ENCODE measurements at regions of chr3 and their contacts with region 1.

Region 1: GRCh38 chr3:63961891-63962290 is 49.7 kb upstream of the SCAANT1 start:
- DNase-seq: peak in 1 of 2 experiments; percentile 65
- H3K4me3 ChIP-seq: no peak overlapping the region
- H3K27ac ChIP-seq: no peak overlapping the region
- H3K4me1 ChIP-seq: peaks cover 13% of the 10 kb centered on the region
- H3K27me3 ChIP-seq: no peaks in the 10 kb centered on the region
- CTCF ChIP-seq: peak; percentile 74

Region 2: GRCh38 chr3:63951492-63952247 is 10.2 kb before region 1 on chr3:
- CTCF ChIA-PET with region 1: no interaction called
- POLR2A ChIA-PET with region 1: interaction called, 10 read pairs
- intact Hi-C with region 1: no loop called
- DNase-seq: no peak
- H3K4me3 ChIP-seq: no peak overlapping the region
- H3K27ac ChIP-seq: no peak overlapping the region
- H3K4me1 ChIP-seq: no peaks in the 10 kb centered on the region
- H3K27me3 ChIP-seq: no peaks in the 10 kb centered on the region
- CTCF ChIP-seq: no peak

Measured in PC-9 (cell line).